Lower leg skin (tissue), 4 donors: ENCODE measurements at regions of chr11 and their contacts with region 1.

Region 1: GRCh38 chr11:44621140-44621681 is 55.7 kb downstream of the CD82 start:
- DNase-seq: peak; percentile 59 to 96
- H3K4me3 ChIP-seq: no peak overlapping the region
- CTCF ChIP-seq: peak in 1 of 3 donors; percentile 95
- POLR2A ChIP-seq: no peak

Region 2: GRCh38 chr11:44556735-44557409 is 64.3 kb before region 1 on chr11:
- intact Hi-C with region 1: loop called (anchors 2 kb)
- DNase-seq: peak; percentile 62 to 92
- H3K4me3 ChIP-seq: no peak overlapping the region
- CTCF ChIP-seq: peak in 1 of 3 donors; percentile 72
- POLR2A ChIP-seq: no peak

Region 3: GRCh38 chr11:44899959-44900358 is 278.7 kb after region 1 on chr11:
- intact Hi-C with region 1: loop called (anchors 5 kb)
- DNase-seq: no peak
- H3K4me3 ChIP-seq: no peak overlapping the region
- CTCF ChIP-seq: no peak
- POLR2A ChIP-seq: no peak